ENCODE measurements at regions of chr1 and their contacts with region 1.

Region 1: DNA sequence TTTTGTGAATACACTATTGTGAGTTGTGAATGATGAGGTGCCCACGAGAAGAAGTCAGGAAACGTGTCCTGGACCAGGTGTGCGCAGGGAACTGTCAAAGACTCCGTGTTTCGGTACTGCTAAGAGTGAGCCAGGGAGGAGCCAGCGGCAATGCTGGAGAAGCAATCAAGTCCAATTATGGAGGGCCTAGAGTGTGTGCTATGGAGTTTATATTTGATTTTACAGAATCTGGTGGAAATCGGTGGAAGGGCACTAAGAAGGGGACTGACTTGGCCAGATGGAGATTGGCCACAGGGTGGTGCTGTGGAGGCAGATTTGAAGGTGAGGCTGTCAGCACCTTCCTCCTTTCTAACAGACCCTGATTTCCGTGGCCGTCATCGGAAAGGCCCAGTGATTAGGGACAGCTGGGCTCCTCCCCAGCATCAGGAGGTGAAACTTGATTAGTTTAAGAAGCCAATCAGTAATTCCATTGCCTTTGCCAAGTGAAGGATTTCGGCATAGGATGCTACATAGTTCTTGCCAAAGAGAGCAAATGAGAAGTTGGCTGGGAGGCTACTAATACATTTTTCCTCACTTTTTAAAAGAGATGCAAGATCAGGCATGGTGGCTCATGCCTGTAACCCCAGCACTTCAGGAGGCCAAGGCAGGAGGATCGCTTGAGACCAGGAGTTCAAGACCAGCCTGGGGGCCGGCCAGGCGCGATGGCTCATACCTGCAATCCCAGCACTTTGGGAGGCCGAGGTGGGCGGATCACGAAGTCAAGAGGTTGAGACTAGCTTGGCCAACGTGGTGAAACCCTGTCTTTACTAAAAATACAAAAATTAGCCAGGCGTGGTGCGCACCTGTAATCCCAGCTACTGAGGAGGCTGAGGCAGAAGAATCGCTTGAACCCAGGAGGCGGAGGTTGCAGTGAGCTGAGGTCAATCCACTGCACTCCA is 7.0 kb downstream of the PTCH2 start:
- DNase-seq: peak; percentile 79 to 83
- H3K4me3 ChIP-seq: no peak overlapping the region
- H3K4me3 Mint-ChIP-seq: no peak overlapping the region
- H3K27ac Mint-ChIP-seq: no peak overlapping the region
- H3K4me1 ChIP-seq: no peaks in the 10 kb centered on the region
- H3K4me1 Mint-ChIP-seq: no peaks in the 10 kb centered on the region
- H3K27me3 ChIP-seq: no peaks in the 10 kb centered on the region
- H3K27me3 Mint-ChIP-seq: no peaks in the 10 kb centered on the region
- CTCF ChIP-seq: peak; percentile 70 to 82

Region 2: DNA sequence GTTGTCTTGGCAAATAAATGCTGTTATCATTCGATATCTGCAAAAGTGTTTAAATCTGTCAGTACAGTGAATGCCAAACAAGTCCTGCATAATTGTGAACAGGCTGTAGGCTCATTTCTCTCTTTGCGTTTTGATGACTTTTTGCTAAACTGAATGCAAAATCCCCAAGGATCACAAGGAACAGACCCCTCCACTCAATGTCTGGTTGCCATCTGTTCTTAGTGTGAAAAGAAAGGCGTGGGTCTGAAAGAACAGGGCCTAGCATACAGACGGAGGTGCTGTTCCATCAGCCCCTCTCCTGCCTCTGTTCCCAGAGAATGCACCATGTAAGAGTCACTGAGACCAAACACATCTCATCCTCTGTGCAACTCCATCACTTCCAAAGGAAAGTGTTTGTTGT is 110.0 kb after region 1 on chr1:
- CTCF ChIA-PET with region 1: no interaction called
- POLR2A ChIA-PET with region 1: no interaction called
- intact Hi-C with region 1: no loop called
- DNase-seq: no peak
- H3K4me3 ChIP-seq: no peak overlapping the region
- H3K4me3 Mint-ChIP-seq: no peak overlapping the region
- H3K27ac Mint-ChIP-seq: no peak overlapping the region
- H3K4me1 ChIP-seq: peaks cover 13% of the 10 kb centered on the region
- H3K4me1 Mint-ChIP-seq: peaks cover 3% of the 10 kb centered on the region
- H3K27me3 ChIP-seq: no peaks in the 10 kb centered on the region
- H3K27me3 Mint-ChIP-seq: no peaks in the 10 kb centered on the region
- CTCF ChIP-seq: no peak

Region 3: DNA sequence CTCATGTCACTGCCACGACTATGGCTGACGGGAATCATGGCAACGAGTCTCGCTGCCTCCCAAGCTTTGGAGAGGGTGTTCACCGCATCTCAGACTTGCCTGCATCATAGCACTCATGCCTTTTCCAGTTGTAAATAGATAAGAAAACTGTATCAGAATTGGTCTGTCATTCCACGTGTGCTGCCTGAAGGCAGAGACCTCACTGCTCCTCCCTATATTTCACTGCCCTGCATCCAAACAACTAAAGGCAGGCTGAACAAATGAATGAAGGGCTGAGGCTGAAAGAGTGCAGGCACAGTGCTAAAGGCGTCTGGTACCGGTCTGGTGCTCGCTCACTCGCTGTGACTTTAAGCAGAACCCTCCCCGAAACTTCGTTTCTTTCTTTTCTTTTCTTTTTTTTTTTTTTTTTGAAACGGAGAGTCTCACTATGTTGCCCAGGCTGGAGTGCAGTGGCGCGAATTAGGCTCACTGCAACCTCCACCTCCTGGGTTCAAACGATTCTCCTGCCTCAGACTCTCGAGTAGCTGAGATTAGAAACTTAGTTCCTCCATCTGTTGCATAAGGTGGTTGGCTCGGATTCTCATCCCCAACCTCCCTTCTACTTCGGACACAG is 149.8 kb after region 1 on chr1:
- CTCF ChIA-PET with region 1: no interaction called
- POLR2A ChIA-PET with region 1: no interaction called
- intact Hi-C with region 1: loop called (anchors 5 kb)
- DNase-seq: no peak
- H3K4me3 ChIP-seq: peak overlapping the region; percentile 76
- H3K4me3 Mint-ChIP-seq: peak overlapping the region; percentile 98
- H3K27ac Mint-ChIP-seq: peak overlapping the region; percentile 96
- H3K4me1 ChIP-seq: 0 out of 2 replicates have a peak, but pooled peaks cover 5% of the 10 kb centered on the region
- H3K4me1 Mint-ChIP-seq: no peaks in the 10 kb centered on the region
- H3K27me3 ChIP-seq: no peaks in the 10 kb centered on the region
- H3K27me3 Mint-ChIP-seq: no peaks in the 10 kb centered on the region
- CTCF ChIP-seq: no peak

Measured in Caco-2 (cell line).